SK-N-SH (cell line): ENCODE measurements at regions of chrX and their contacts with region 1.

Region 1: DNA sequence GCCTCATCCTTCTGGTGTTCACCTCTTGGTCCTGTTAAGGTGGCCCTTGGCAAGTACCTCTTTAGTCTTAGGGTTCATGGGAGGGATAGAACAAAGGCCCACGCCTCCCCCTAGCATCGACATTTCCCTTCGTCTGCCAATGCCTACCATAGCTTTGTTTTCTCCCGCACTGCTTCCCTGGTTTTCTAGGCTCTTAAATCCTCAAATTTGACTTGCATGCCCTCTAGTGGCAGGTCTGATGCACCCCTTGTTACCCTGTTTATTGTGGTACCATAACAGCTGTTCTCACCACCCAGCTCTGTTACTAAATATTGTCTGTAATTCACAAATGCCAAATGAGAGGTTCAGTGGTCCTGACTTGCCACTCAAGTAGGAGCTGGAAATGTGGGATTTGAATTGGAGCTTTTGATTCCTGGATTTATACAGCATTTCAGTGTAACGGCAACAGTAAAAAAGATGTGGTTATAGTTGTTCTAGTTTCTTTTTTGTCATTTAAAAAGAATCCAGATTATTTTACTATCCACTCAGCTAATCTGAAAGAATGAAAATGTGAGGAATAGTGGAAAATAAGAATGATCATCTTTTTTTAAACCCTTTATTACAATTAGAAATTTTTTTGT is 100.1 kb downstream of the REPS2 start:
- DNase-seq: peak; percentile 51
- H3K4me3 ChIP-seq: peak overlapping the region in 1 of 2 experiments; percentile 29; a peak in 1 of 4 replicates
- H3K27ac ChIP-seq: no peak overlapping the region
- H3K4me1 ChIP-seq: no peaks in the 10 kb centered on the region; a peak in 1 of 4 replicates
- H3K27me3 ChIP-seq: no peaks in the 10 kb centered on the region; the same call in 1 of the 2 replicates
- CTCF ChIP-seq: peak; percentile 90
- EP300 ChIP-seq: no peak
- RAD21 ChIP-seq: peak; percentile 86

Region 2: DNA sequence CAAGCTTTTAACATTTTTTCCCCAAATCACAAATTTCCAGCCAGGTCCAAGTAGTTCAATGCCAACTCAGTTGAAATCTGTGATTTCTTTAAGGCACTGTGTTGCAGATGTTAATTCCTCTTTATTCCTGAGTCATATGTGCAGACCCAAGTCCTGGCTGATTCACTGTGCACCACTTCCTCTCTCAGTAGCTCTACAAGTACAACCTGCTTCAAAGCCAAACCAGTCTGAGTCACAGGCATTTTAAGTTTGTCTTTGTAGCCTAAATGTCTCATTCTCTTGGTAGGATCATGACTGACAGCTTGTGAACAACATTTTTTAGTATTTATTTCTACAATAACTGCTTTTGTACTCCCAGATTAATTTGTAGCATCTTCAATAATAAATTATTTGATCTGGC is 562.2 kb before region 1 on chrX:
- CTCF ChIA-PET with region 1: no interaction called
- POLR2A ChIA-PET with region 1: no interaction called
- DNase-seq: no peak
- H3K4me3 ChIP-seq: no peak overlapping the region
- H3K27ac ChIP-seq: peak overlapping the region in 1 of 2 experiments; percentile 57; a peak in 2 of 4 replicates
- H3K4me1 ChIP-seq: peaks cover 0 to 19% of the 10 kb centered on the region in 2 experiments; a peak in 2 of 4 replicates
- H3K27me3 ChIP-seq: no peaks in the 10 kb centered on the region
- CTCF ChIP-seq: 0 out of 2 replicates have a peak, but pooled peaks have one; percentile 22
- EP300 ChIP-seq: peak in 1 of 2 experiments; percentile 94; a peak in 2 of 4 replicates
- RAD21 ChIP-seq: no peak

Region 3: GRCh38 chrX:16882702-16883486 is 163.7 kb before region 1 on chrX:
- CTCF ChIA-PET with region 1: interaction called, 34 read pairs
- POLR2A ChIA-PET with region 1: interaction called, 8 read pairs
- DNase-seq: peak; percentile 70
- H3K4me3 ChIP-seq: peak overlapping the region; percentile 51 to 59
- H3K27ac ChIP-seq: peak overlapping the region; percentile 43 to 85; a peak in 3 of 4 replicates
- H3K4me1 ChIP-seq: peaks cover 0 to 3% of the 10 kb centered on the region in 2 experiments; a peak in 1 of 4 replicates
- H3K27me3 ChIP-seq: no peaks in the 10 kb centered on the region; the same call in 1 of the 2 replicates
- CTCF ChIP-seq: peak; percentile 87
- EP300 ChIP-seq: no peak
- RAD21 ChIP-seq: peak; percentile 71

Region 4: GRCh38 chrX:17033225-17033624 is 13.4 kb before region 1 on chrX:
- CTCF ChIA-PET with region 1: interaction called, 22 read pairs
- POLR2A ChIA-PET with region 1: no interaction called
- DNase-seq: no peak
- H3K4me3 ChIP-seq: no peak overlapping the region
- H3K27ac ChIP-seq: no peak overlapping the region
- H3K4me1 ChIP-seq: peaks cover 0 to under 1% of the 10 kb centered on the region in 2 experiments; a peak in 1 of 4 replicates
- H3K27me3 ChIP-seq: peaks cover 5% of the 10 kb centered on the region; the same call in 1 of the 2 replicates
- CTCF ChIP-seq: no peak
- EP300 ChIP-seq: no peak
- RAD21 ChIP-seq: no peak

Region 5: GRCh38 chrX:17065100-17065499 is 18.5 kb after region 1 on chrX:
- CTCF ChIA-PET with region 1: interaction called, 12 read pairs
- POLR2A ChIA-PET with region 1: no interaction called
- DNase-seq: no peak
- H3K4me3 ChIP-seq: no peak overlapping the region
- H3K27ac ChIP-seq: no peak overlapping the region
- H3K4me1 ChIP-seq: no peaks in the 10 kb centered on the region; a peak in 1 of 4 replicates
- H3K27me3 ChIP-seq: no peaks in the 10 kb centered on the region
- CTCF ChIP-seq: peak; percentile 33; the same call in 1 of the 2 replicates
- EP300 ChIP-seq: no peak
- RAD21 ChIP-seq: no peak